ENCODE measurements at regions of chr10 and their contacts with region 1.

Region 1: GRCh38 chr10:125982260-125982948 is 86.0 kb downstream of the FANK1 start:
- DNase-seq: no peak
- ATAC-seq: peak; percentile 77

Region 2: DNA sequence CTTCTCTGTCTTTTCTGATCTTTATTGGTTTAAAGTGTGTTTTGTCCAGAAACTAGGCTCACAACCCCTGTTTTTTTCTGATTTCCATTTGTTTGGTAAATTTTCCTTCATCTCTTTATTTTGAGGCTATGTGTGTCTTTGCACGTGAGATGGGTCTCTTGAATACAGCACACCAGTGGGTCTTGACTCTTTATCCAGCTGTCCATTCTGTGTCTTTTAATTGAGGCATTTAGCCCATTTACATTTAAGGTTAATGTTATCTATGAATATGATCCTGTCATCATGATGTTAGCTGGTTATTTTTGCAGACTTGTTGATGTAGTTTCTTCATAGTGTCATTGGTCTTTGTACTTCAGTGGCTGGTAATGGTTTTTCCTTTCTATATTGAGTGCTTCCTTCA is 309.5 kb before region 1 on chr10:
- intact Hi-C with region 1: no loop called
- DNase-seq: no peak
- ATAC-seq: no peak

Region 3: GRCh38 chr10:125707541-125708468 is 274.6 kb before region 1 on chr10:
- intact Hi-C with region 1: no loop called
- DNase-seq: no peak
- ATAC-seq: no peak

Region 4: GRCh38 chr10:125859128-125859817 is 123.1 kb before region 1 on chr10:
- intact Hi-C with region 1: no loop called
- DNase-seq: no peak
- ATAC-seq: no peak

Region 5: GRCh38 chr10:125871338-125871737 is 111.1 kb before region 1 on chr10:
- intact Hi-C with region 1: loop called (anchors 5 kb)
- DNase-seq: no peak
- ATAC-seq: no peak

Region 6: DNA sequence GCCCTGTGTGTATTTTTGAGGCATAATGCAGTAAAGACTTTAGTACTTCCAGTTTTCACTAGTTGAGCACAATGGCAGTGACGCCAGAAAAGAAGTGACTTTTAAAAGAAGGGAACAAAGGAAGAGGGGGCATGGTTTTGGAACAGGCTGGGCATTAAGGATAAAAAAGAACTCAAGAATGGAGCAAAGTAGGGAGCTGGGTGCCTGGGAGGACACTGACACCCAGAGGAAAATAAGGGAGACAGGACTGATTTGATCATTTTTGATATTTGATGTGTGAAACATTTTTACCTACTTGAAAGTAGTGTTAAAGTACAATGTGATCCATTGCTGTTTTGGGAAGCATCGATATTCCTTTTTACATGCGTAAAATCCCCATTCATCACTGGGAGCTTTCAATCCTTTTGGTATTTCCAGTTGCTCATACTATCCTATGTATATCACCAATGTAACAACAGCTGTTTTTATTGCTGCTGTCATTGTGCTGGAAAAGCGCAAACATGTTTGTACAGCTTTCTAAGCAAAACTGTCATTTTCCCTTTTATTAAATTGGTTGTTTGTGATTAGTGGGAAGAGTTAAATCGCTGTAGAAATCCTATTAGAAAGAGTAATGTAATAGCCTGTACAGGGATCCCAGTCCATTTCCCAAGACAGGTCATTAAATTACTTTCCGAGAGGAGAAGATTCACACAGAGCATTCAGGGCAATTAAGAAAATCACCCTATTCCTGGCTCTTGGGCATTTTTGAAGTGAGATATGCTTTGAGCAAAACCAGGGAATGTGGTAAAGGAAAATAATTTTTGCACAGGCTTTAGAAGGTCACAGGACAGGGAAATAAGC is 320.6 kb after region 1 on chr10:
- intact Hi-C with region 1: loop called (anchors 10 kb)
- DNase-seq: no peak
- ATAC-seq: no peak

Region 7: DNA sequence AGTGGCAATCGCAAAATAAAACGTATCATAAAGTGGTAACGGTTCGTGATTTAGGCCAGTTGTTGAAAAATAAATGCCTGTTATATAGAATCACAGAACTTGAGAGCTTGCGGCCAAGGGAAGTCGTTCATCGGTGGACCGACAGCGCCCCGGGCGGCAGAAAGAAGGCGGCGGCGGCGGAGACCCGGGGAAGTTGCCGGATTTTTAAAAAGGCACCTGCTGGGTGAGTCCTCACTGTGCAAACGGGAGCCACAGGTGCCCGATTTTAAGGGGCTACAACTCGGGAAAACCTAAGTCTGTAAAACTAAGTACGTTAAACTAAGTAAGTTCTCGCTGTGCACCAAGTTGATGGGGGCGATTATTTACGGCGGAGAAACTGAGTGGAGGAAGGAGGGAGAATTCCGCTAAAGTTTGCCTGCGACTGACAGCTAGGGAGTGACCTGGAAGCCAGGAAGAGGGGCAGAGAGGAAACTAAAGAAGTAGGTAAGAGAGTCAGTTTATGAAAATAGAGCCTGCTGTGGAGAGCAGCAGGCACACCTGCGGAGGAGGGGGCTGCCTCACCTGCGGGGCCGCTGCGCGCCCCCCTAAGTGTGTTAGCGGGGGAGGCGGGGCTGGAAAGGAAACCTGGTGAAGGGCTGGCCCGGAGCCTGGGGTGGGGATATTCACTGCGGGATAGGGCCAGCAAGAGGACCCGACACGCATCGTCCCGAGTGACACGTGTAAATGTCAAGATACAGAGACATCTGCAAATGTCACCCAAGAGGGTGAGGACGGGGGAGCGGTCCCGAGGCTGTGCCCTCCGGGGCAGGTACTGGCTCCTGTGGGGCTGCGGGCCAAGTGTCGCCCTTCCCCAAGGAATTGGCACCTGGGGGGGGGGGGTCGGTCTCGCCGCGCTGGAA is 404.9 kb after region 1 on chr10:
- intact Hi-C with region 1: loop called (anchors 5 kb)
- DNase-seq: peak; percentile 70
- ATAC-seq: peak; percentile 65

Region 8: GRCh38 chr10:126504063-126504739 is 521.8 kb after region 1 on chr10:
- intact Hi-C with region 1: loop called (anchors 2 kb)
- DNase-seq: peak; percentile 45
- ATAC-seq: no peak

Region 9: DNA sequence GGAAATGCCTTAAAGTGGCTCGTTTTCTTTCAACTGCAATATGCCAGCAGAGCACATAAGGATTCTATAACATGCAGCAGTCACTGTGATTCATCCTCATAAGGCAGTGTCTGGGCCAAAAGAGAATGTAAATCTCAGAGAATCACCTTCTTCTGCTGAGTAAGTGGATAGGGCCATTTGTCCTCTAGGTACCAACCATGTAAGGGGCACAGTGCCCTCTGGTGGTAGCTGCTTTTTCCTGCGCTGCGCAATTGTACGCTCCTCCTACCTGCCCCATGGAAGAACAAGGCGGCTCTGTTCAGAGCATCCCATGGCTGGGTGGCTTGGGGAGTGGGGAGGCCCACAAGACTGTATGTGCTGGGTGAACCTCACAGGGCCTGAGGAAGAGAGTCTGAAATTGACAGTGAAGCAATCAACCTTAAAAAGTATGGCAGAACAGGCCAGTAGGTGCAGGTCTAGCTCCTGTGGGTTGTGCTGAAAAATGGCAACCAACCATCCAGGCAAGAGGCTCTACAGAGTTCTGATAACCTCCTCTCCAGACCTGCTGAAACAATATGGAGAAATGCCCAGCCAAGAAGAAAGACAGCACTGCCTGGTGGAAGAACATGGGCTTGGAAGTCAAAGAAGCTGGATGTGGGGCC is 766.7 kb after region 1 on chr10:
- intact Hi-C with region 1: loop called (anchors 5 kb)
- DNase-seq: peak; percentile 77
- ATAC-seq: peak; percentile 83

Region 10: DNA sequence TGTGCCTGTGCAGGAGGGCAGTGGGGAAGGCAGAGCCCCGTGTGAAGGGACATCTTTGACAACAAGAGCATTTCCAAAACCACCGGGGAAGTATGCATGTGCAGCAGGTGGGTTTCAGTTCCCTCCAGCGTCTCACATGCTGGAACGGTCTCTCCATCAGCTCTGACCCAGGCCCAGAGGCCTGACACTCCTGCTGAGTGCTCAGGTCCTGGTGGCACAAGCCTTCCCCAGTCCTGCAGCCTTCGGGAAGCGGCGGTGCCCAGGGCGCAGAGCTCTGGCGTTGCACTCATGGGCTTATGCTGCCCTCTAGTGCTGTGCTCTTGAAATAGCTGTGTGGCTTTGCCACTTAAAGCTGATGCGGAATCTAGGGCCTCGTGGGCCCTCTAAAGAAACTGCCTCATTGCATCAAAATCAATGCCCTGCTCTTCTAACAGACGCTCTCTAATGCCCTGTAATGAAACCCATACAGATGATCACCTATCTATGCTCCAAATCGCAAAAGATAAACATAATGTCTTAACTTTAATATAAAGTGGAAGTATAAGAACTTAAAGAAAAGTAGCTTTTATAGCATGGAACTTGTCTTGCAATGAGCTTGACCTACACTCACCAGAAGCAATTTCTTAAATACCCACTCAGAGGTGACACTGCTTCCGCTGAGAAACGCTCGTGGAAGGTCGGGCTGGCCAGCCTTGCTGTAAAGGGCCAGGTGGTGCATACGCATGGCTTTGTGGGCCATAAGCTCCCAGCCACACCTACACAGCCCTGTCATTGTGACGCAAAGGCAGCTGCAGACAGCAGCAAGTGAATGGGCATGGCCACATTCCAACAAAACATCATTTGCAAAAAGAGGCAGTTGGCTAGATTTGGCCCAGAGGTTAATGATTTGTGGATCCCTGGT is 1871.7 kb after region 1 on chr10:
- intact Hi-C with region 1: loop called (anchors 10 kb)
- DNase-seq: peak; percentile 71
- ATAC-seq: peak; percentile 95